ENCODE measurements at regions of chr4 and their contacts with region 1.

Region 1: DNA sequence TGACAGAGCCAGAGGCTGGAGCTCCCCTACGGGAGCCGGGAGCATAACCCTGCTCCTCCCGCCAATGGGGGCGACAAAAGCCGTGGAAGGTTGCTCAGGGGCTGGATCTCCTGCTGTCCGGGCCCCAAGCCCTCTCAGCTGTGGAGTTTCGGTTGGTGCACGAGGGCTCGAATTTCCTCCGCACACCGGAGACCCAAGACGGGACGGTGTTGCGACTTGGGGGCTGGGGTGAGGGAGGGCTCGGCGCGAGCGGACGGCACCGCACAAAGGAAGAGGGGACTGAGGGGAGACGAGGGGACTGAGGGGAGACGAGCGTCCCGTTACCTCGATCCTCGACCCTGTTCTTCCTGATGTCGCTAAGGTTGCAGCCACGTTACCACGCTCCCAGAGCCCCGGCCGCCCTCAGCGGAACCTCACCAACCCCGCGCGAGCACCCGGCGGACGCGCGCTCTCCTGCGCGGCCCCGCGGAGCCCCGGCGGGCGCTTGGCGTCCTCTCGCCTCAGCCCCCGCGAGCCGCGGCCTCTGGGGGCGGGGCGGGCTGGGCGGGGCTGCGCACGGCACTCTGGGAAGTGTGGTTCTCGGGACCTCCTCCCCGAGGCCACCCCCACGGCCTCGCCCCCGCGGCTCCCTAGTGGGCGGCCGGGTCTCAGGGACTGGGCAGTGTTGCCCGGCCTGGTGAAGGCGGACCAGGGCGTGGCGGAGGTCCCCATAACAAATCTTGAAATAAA is at the start of gene KLHL8:
- DNase-seq: peak; percentile 92
- ATAC-seq: peak; percentile 91
- H3K4me3 Mint-ChIP-seq: peak within 1 kb of the TSS; percentile 89
- H3K27ac Mint-ChIP-seq: peak within 1 kb of the TSS; percentile 92
- H3K4me1 Mint-ChIP-seq: peaks cover 17% of the 10 kb centered on the region
- H3K27me3 Mint-ChIP-seq: peaks cover 2% of the 10 kb centered on the region
- total RNA-seq, gene KLHL8: 9.8 to 10.3 TPM

Region 2: GRCh38 chr4:87235020-87235671 is 14.9 kb after region 1 on chr4:
- CTCF ChIA-PET with region 1: interaction called, 12 read pairs
- POLR2A ChIA-PET with region 1: no interaction called
- intact Hi-C with region 1: loop called (anchors 1 to 2 kb)
- DNase-seq: no peak
- ATAC-seq: no peak
- H3K4me3 Mint-ChIP-seq: peak overlapping the region; percentile 69
- H3K27ac Mint-ChIP-seq: no peak overlapping the region
- H3K4me1 Mint-ChIP-seq: peaks cover 1% of the 10 kb centered on the region
- H3K27me3 Mint-ChIP-seq: no peaks in the 10 kb centered on the region

Region 3: GRCh38 chr4:87390891-87391575 is 170.8 kb after region 1 on chr4 and contains the start of gene HSD17B11:
- CTCF ChIA-PET with region 1: no interaction called
- POLR2A ChIA-PET with region 1: interaction called, 3 read pairs
- intact Hi-C with region 1: loop called in 1 of 2 experiments (anchors 1 kb)
- DNase-seq: peak; percentile 87
- ATAC-seq: peak; percentile 98
- H3K4me3 Mint-ChIP-seq: peak within 1 kb of the TSS; percentile 78
- H3K27ac Mint-ChIP-seq: peak within 1 kb of the TSS; percentile 92
- H3K4me1 Mint-ChIP-seq: peaks cover 47% of the 10 kb centered on the region
- H3K27me3 Mint-ChIP-seq: no peaks in the 10 kb centered on the region
- total RNA-seq, gene HSD17B11: 12.0 to 14.9 TPM

Measured in activated CD4-positive, alpha-beta T cell treated with anti-CD3 and anti-CD28 coated beads for 36 hours (primary cell).